Activated CD4-positive, alpha-beta T cell treated with anti-CD3 and anti-CD28 coated beads, Interleukin-2, amount 10 ng/mL, durations not matched to agents 24 days and 14 days (primary cell): ENCODE measurements at regions of chr7 and their contacts with region 1.

Region 1: GRCh38 chr7:7190142-7190541 is 7.8 kb downstream of the C1GALT1 start:
- DNase-seq: no peak
- H3K4me3 Mint-ChIP-seq: no peak overlapping the region
- H3K27ac Mint-ChIP-seq: no peak overlapping the region
- H3K4me1 Mint-ChIP-seq: peaks cover 37% of the 10 kb centered on the region
- H3K27me3 Mint-ChIP-seq: no peaks in the 10 kb centered on the region

Region 2: DNA sequence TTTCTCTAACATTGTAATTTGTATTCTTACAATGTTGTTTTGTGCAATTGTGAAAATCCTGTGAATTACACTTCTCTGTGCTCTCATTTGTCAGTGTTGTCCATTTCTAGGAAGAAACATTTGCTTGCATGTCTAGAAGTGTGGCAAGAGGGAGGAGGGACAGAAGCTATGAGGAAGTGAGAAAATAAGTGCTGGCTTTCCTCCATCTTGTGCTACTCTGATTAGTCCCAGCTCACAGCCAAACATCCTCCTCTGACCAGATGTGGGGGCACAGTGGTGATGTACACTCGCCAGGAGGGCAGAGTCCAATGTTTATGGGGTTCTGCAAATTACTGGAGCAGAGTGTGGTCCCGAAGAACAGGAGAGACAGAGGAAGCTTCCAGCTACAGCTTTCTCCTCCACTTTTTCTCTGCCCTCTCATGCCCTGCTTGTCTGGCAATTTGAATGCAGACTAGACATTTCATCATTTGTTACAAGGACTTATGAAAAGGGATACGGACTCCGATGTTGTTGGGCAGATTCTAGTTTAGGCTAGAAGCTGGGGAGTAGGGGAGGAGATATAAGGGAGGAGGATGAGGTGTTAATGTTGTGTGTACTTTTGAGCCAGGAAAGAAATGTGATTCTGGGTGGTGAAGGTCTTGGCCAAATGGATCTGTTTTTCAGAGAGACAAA is 138.8 kb before region 1 on chr7:
- intact Hi-C with region 1: no loop called
- DNase-seq: no peak
- H3K4me3 Mint-ChIP-seq: no peak overlapping the region
- H3K27ac Mint-ChIP-seq: no peak overlapping the region
- H3K4me1 Mint-ChIP-seq: no peaks in the 10 kb centered on the region
- H3K27me3 Mint-ChIP-seq: no peaks in the 10 kb centered on the region

Region 3: GRCh38 chr7:7103343-7104313 is 86.5 kb before region 1 on chr7:
- intact Hi-C with region 1: no loop called
- DNase-seq: peak; percentile 57
- H3K4me3 Mint-ChIP-seq: no peak overlapping the region
- H3K27ac Mint-ChIP-seq: no peak overlapping the region
- H3K4me1 Mint-ChIP-seq: peaks cover 16% of the 10 kb centered on the region
- H3K27me3 Mint-ChIP-seq: no peaks in the 10 kb centered on the region

Region 4: GRCh38 chr7:7201578-7202374 is 11.6 kb after region 1 on chr7:
- intact Hi-C with region 1: loop called (anchors 1 kb)
- DNase-seq: peak; percentile 83
- H3K4me3 Mint-ChIP-seq: peak overlapping the region; percentile 79
- H3K27ac Mint-ChIP-seq: peak overlapping the region; percentile 75
- H3K4me1 Mint-ChIP-seq: peaks cover 66% of the 10 kb centered on the region
- H3K27me3 Mint-ChIP-seq: no peaks in the 10 kb centered on the region